MCF 10A (cell line): ENCODE measurements at regions of chr7 and their contacts with region 1.

Region 1: GRCh38 chr7:130982160-130982638 is 248.2 kb upstream of the KLF14 start:
- DNase-seq: peak; percentile 69
- H3K4me3 Mint-ChIP-seq: no peak overlapping the region
- H3K27ac Mint-ChIP-seq: no peak overlapping the region
- H3K4me1 Mint-ChIP-seq: peaks cover 21% of the 10 kb centered on the region
- H3K27me3 Mint-ChIP-seq: no peaks in the 10 kb centered on the region
- CTCF ChIP-seq: peak; percentile 68

Region 2: DNA sequence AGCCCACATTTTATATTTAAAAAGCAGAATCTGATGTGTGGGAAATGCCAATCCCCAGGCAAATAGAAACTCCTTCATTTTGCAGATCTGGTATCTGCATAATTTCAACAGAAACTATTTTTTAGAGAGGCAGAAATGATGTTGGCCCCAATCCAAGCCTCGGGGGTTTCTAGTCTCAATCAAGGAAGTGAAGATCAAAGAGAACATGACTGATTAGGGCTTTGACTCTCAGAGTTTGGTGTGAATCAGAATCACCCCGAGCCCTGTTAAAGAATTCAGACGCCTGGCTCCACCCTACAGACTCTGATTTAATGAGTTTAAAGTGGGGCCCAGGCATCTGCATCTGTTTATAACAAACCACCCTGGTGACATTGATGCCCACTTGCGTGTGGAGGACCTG is 992.7 kb before region 1 on chr7:
- CTCF ChIA-PET with region 1: no interaction called
- POLR2A ChIA-PET with region 1: no interaction called
- intact Hi-C with region 1: no loop called
- DNase-seq: peak; percentile 15
- H3K4me3 Mint-ChIP-seq: no peak overlapping the region
- H3K27ac Mint-ChIP-seq: no peak overlapping the region
- H3K4me1 Mint-ChIP-seq: no peaks in the 10 kb centered on the region
- H3K27me3 Mint-ChIP-seq: no peaks in the 10 kb centered on the region
- CTCF ChIP-seq: no peak

Region 3: GRCh38 chr7:130741331-130741995 is 240.7 kb before region 1 on chr7:
- CTCF ChIA-PET with region 1: no interaction called
- POLR2A ChIA-PET with region 1: no interaction called
- intact Hi-C with region 1: no loop called
- DNase-seq: no peak
- H3K4me3 Mint-ChIP-seq: no peak overlapping the region
- H3K27ac Mint-ChIP-seq: no peak overlapping the region
- H3K4me1 Mint-ChIP-seq: no peaks in the 10 kb centered on the region
- H3K27me3 Mint-ChIP-seq: peaks cover 48% of the 10 kb centered on the region
- CTCF ChIP-seq: no peak

Region 4: DNA sequence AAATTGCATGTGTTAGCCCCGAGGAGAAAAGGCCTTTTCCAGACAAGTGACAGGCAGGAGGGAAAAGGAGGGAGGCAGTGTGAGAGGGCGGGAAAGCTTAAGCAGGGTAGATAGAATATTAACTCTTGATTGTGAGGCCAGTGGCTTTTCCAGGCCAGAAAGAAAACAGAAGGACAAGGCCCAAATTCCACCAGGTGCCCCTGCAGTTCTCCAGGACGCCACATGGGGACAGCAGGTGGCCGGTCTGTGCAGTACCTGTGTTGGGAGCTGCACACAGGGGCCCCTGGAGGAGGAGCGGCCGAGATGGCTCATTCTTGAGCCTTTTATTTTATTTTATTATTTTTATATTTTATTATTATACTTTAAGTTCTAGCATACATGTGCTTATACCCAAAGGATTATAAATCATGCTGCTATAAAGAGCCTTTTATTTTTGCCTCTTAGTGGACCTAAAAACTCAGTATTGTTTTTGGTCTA is 106.9 kb before region 1 on chr7:
- CTCF ChIA-PET with region 1: interaction called, 14 read pairs
- POLR2A ChIA-PET with region 1: interaction called, 3 read pairs
- intact Hi-C with region 1: no loop called
- DNase-seq: peak; percentile 69
- H3K4me3 Mint-ChIP-seq: no peak overlapping the region
- H3K27ac Mint-ChIP-seq: peak overlapping the region; percentile 89
- H3K4me1 Mint-ChIP-seq: peaks cover 41% of the 10 kb centered on the region
- H3K27me3 Mint-ChIP-seq: no peaks in the 10 kb centered on the region
- CTCF ChIP-seq: peak; percentile 92

Region 5: GRCh38 chr7:130966246-130967009 is 15.8 kb before region 1 on chr7:
- CTCF ChIA-PET with region 1: interaction called, 26 read pairs
- POLR2A ChIA-PET with region 1: interaction called, 11 read pairs
- intact Hi-C with region 1: no loop called
- DNase-seq: no peak
- H3K4me3 Mint-ChIP-seq: no peak overlapping the region
- H3K27ac Mint-ChIP-seq: no peak overlapping the region
- H3K4me1 Mint-ChIP-seq: peaks cover 12% of the 10 kb centered on the region
- H3K27me3 Mint-ChIP-seq: no peaks in the 10 kb centered on the region
- CTCF ChIP-seq: no peak

Region 6: GRCh38 chr7:131007394-131008330 is 25.5 kb after region 1 on chr7:
- CTCF ChIA-PET with region 1: interaction called, 102 read pairs
- POLR2A ChIA-PET with region 1: interaction called, 17 read pairs
- intact Hi-C with region 1: loop called (anchors 1 kb)
- DNase-seq: peak; percentile 87
- H3K4me3 Mint-ChIP-seq: peak overlapping the region; percentile 15
- H3K27ac Mint-ChIP-seq: peak overlapping the region; percentile 84
- H3K4me1 Mint-ChIP-seq: peaks cover 46% of the 10 kb centered on the region
- H3K27me3 Mint-ChIP-seq: no peaks in the 10 kb centered on the region
- CTCF ChIP-seq: peak; percentile 58

Region 7: DNA sequence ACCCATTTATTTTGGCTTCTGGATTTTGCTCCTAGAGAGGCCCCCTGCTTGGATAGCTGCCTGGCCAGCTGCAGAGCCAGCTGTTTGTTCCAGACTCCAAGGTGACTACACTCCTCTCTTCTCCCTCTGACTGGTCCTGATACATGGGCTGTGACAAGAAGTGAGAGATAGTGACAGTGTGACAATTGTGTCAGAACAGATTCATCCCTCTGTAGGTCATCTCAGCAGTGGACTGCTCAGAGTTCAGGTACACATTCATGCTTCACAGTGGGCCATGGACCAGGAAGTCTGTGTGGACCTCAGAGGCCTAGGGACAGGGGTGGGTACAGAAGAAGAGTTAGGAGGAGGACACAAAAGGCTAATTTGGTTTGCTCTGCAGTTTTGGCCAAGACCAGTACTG is 157.3 kb after region 1 on chr7:
- CTCF ChIA-PET with region 1: no interaction called
- POLR2A ChIA-PET with region 1: no interaction called
- intact Hi-C with region 1: no loop called
- DNase-seq: no peak
- H3K4me3 Mint-ChIP-seq: no peak overlapping the region
- H3K27ac Mint-ChIP-seq: no peak overlapping the region
- H3K4me1 Mint-ChIP-seq: no peaks in the 10 kb centered on the region
- H3K27me3 Mint-ChIP-seq: no peaks in the 10 kb centered on the region
- CTCF ChIP-seq: no peak

Region 8: GRCh38 chr7:131424219-131424822 is 442.1 kb after region 1 on chr7:
- CTCF ChIA-PET with region 1: interaction called, 6 read pairs
- POLR2A ChIA-PET with region 1: no interaction called
- intact Hi-C with region 1: loop called (anchors 5 kb)
- DNase-seq: peak; percentile 39
- H3K4me3 Mint-ChIP-seq: no peak overlapping the region
- H3K27ac Mint-ChIP-seq: no peak overlapping the region
- H3K4me1 Mint-ChIP-seq: peaks cover 6% of the 10 kb centered on the region
- H3K27me3 Mint-ChIP-seq: no peaks in the 10 kb centered on the region
- CTCF ChIP-seq: peak; percentile 60

Region 9: GRCh38 chr7:131717181-131717580 is 735.0 kb after region 1 on chr7:
- CTCF ChIA-PET with region 1: no interaction called
- POLR2A ChIA-PET with region 1: no interaction called
- intact Hi-C with region 1: no loop called
- DNase-seq: no peak
- H3K4me3 Mint-ChIP-seq: no peak overlapping the region
- H3K27ac Mint-ChIP-seq: no peak overlapping the region
- H3K4me1 Mint-ChIP-seq: no peaks in the 10 kb centered on the region
- H3K27me3 Mint-ChIP-seq: no peaks in the 10 kb centered on the region
- CTCF ChIP-seq: no peak